Cardiac septum (tissue), 1 donor: ENCODE measurements at regions of chr5 and their contacts with region 1.

Region 1: GRCh38 chr5:10987930-10988504 is 227.0 kb upstream of the DAP start:
- DNase-seq: peak; percentile 91

Region 2: GRCh38 chr5:10701567-10702039 is 286.4 kb before region 1 on chr5:
- intact Hi-C with region 1: loop called (anchors 5 kb)
- DNase-seq: no peak

Region 3: GRCh38 chr5:10856683-10857337 is 131.2 kb before region 1 on chr5:
- intact Hi-C with region 1: loop called (anchors 5 kb)
- DNase-seq: no peak

Region 4: GRCh38 chr5:11153670-11154377 is 165.8 kb after region 1 on chr5:
- intact Hi-C with region 1: loop called (anchors 5 kb)
- DNase-seq: no peak

Region 5: GRCh38 chr5:11182441-11183268 is 194.6 kb after region 1 on chr5:
- intact Hi-C with region 1: loop called (anchors 5 kb)
- DNase-seq: no peak

Region 6: DNA sequence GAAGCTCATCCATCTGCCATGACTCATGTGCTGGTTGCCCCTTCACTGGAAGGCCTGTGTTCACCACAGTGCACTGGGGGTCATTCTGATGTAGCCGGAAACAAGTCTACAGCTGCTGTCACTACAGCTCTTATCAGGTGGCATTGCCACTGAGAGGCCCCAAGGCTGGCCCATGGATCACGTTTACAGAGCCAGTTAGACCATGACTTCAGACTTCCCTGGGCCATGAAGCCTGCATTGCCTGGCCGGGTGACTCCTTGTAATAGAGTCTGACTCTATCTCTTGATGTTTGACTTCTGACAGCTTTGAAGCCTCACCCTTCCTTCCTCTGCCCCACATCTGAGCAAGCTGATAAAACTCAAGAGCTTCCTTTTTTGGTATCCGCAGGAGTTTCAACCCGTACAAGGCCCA is 246.5 kb after region 1 on chr5:
- intact Hi-C with region 1: loop called (anchors 5 kb)
- DNase-seq: peak; percentile 77